Activated CD8-positive, alpha-beta T cell treated with anti-CD3 and anti-CD28 coated beads for 36 hours (primary cell): ENCODE measurements at regions of chr3 and their contacts with region 1.

Region 1: GRCh38 chr3:186783073-186783730 is at the start of gene EIF4A2:
- DNase-seq: peak; percentile 91
- ATAC-seq: peak; percentile 78
- H3K4me3 Mint-ChIP-seq: peak within 1 kb of the TSS; percentile 97
- H3K27ac Mint-ChIP-seq: peak within 1 kb of the TSS; percentile 99
- H3K4me1 Mint-ChIP-seq: peaks cover 30% of the 10 kb centered on the region
- H3K27me3 Mint-ChIP-seq: no peaks in the 10 kb centered on the region
- CTCF ChIP-seq: no peak
- total RNA-seq, gene EIF4A2: 450 to 466 TPM

Region 2: GRCh38 chr3:186493525-186494255 is 289.5 kb before region 1 on chr3:
- CTCF ChIA-PET with region 1: no interaction called
- POLR2A ChIA-PET with region 1: no interaction called
- intact Hi-C with region 1: no loop called
- DNase-seq: no peak
- ATAC-seq: no peak
- H3K4me3 Mint-ChIP-seq: no peak overlapping the region
- H3K27ac Mint-ChIP-seq: no peak overlapping the region
- H3K4me1 Mint-ChIP-seq: peaks cover 9% of the 10 kb centered on the region
- H3K27me3 Mint-ChIP-seq: peaks cover 2% of the 10 kb centered on the region
- CTCF ChIP-seq: no peak

Region 3: DNA sequence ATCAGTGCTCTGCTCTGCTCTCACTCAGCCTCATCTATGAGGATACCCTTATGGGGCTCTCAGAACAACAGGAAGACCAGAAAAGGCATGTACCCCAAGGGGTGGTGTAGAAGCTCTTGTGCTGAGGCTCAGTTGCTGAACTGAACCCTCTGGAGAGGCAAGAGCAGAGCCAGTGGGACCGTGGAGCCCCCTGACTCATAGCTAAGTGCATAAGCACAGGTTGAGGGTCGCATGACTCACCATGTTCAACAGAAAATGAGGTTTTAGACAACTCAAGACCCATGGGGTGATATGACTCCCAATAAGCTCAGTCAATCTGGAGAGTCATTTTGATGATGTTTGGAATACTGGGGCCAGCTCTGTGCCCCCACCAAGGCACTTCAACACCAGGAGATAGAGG is 276.3 kb before region 1 on chr3:
- CTCF ChIA-PET with region 1: no interaction called
- POLR2A ChIA-PET with region 1: no interaction called
- intact Hi-C with region 1: no loop called
- DNase-seq: peak; percentile 55
- ATAC-seq: peak; percentile 57
- H3K4me3 Mint-ChIP-seq: no peak overlapping the region
- H3K27ac Mint-ChIP-seq: no peak overlapping the region
- H3K4me1 Mint-ChIP-seq: peaks cover 30% of the 10 kb centered on the region
- H3K27me3 Mint-ChIP-seq: no peaks in the 10 kb centered on the region
- CTCF ChIP-seq: no peak

Region 4: DNA sequence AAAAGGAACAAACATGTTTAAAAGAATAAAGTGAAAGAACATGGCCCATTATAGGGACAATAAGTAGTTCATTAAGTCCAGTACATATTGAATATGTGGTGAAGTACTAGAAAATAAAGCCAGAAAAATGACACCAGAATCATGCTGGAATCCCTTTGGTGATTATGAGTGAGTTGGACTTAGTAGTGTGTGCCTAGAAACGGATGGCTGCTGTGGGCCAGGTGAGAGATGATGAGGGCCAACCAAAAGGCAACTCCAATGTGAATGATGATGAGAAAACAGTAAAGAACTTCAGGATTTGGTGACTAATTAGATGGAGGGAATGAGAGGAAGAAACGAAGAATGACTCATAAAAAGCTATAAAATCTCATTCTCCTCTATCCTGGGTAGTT is 242.4 kb before region 1 on chr3:
- CTCF ChIA-PET with region 1: no interaction called
- POLR2A ChIA-PET with region 1: no interaction called
- intact Hi-C with region 1: no loop called
- DNase-seq: no peak
- ATAC-seq: peak; percentile 19
- H3K4me3 Mint-ChIP-seq: no peak overlapping the region
- H3K27ac Mint-ChIP-seq: no peak overlapping the region
- H3K4me1 Mint-ChIP-seq: peaks cover 53% of the 10 kb centered on the region
- H3K27me3 Mint-ChIP-seq: no peaks in the 10 kb centered on the region
- CTCF ChIP-seq: no peak

Region 5: GRCh38 chr3:186570096-186570940 is 212.9 kb before region 1 on chr3 and contains the start of gene DNAJB11:
- CTCF ChIA-PET with region 1: interaction called, 5 read pairs
- POLR2A ChIA-PET with region 1: interaction called, 103 read pairs
- intact Hi-C with region 1: no loop called
- DNase-seq: peak; percentile 100
- ATAC-seq: peak; percentile 91
- H3K4me3 Mint-ChIP-seq: peak within 1 kb of the TSS; percentile 93
- H3K27ac Mint-ChIP-seq: peak within 1 kb of the TSS; percentile 95
- H3K4me1 Mint-ChIP-seq: peaks cover 54% of the 10 kb centered on the region
- H3K27me3 Mint-ChIP-seq: no peaks in the 10 kb centered on the region
- CTCF ChIP-seq: no peak
- total RNA-seq, gene DNAJB11: 30.0 to 31.5 TPM

Region 6: GRCh38 chr3:186640473-186640818 is 142.8 kb before region 1 on chr3:
- CTCF ChIA-PET with region 1: no interaction called
- POLR2A ChIA-PET with region 1: interaction called, 12 read pairs
- intact Hi-C with region 1: no loop called
- DNase-seq: no peak
- ATAC-seq: no peak
- H3K4me3 Mint-ChIP-seq: no peak overlapping the region
- H3K27ac Mint-ChIP-seq: no peak overlapping the region
- H3K4me1 Mint-ChIP-seq: peaks cover 25% of the 10 kb centered on the region
- H3K27me3 Mint-ChIP-seq: peaks cover 18% of the 10 kb centered on the region
- CTCF ChIP-seq: no peak

Region 7: GRCh38 chr3:186798239-186798874 is 15.2 kb after region 1 on chr3:
- CTCF ChIA-PET with region 1: interaction called, 4 read pairs
- POLR2A ChIA-PET with region 1: interaction called, 178 read pairs
- intact Hi-C with region 1: no loop called
- DNase-seq: no peak
- ATAC-seq: no peak
- H3K4me3 Mint-ChIP-seq: no peak overlapping the region
- H3K27ac Mint-ChIP-seq: no peak overlapping the region
- H3K4me1 Mint-ChIP-seq: peaks cover 24% of the 10 kb centered on the region
- H3K27me3 Mint-ChIP-seq: no peaks in the 10 kb centered on the region
- CTCF ChIP-seq: no peak

Region 8: GRCh38 chr3:186826976-186827731 is 44.0 kb after region 1 on chr3:
- CTCF ChIA-PET with region 1: interaction called, 4 read pairs
- POLR2A ChIA-PET with region 1: interaction called, 81 read pairs
- intact Hi-C with region 1: no loop called
- DNase-seq: peak; percentile 83
- ATAC-seq: peak; percentile 86
- H3K4me3 Mint-ChIP-seq: peak overlapping the region; percentile 81
- H3K27ac Mint-ChIP-seq: peak overlapping the region; percentile 71
- H3K4me1 Mint-ChIP-seq: peaks cover 28% of the 10 kb centered on the region
- H3K27me3 Mint-ChIP-seq: peaks cover 36% of the 10 kb centered on the region
- CTCF ChIP-seq: no peak